ENCODE measurements at regions of chr10 and their contacts with region 1.

Region 1: DNA sequence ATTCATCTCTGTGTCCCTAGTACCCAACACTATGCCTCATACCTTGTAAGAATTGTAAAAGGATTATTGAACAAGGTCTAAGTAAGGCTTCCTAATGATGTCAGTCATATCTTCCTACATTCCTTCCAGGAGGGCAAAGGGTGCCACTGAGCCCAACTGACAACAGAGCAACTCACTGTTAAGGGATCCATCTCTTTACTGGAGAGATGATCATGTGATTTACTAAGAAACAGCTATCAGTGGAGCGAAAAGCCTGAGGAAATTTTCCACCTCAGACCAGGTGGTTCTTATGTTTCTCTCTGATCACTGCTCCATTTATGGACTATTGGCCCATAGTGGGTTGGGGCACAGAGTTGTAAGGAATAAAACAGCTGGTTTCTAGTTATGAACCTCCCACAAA is 38.9 kb upstream of the CNNM1 start:
- DNase-seq: no peak

Region 2: DNA sequence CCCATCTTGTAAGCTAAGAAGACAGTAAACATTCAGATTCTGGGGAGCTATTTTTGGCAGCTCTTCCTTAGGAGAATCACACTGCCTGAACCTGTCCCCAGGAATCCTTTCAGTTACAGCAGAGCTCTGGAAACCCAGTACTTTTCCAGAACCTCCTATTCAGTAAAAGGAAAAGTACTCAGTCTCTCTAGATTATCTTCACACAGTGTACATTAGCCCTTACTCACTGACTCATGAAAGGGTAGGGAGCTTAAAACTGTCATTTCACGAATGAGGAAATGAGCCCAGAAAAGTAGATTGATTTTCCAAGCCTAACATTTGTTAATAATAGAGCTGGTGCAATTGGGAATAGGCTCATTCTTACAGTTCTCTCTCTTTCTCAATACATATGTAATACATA is 35.0 kb after region 1 on chr10:
- intact Hi-C with region 1: loop called (anchors 2 kb)
- DNase-seq: no peak

Region 3: DNA sequence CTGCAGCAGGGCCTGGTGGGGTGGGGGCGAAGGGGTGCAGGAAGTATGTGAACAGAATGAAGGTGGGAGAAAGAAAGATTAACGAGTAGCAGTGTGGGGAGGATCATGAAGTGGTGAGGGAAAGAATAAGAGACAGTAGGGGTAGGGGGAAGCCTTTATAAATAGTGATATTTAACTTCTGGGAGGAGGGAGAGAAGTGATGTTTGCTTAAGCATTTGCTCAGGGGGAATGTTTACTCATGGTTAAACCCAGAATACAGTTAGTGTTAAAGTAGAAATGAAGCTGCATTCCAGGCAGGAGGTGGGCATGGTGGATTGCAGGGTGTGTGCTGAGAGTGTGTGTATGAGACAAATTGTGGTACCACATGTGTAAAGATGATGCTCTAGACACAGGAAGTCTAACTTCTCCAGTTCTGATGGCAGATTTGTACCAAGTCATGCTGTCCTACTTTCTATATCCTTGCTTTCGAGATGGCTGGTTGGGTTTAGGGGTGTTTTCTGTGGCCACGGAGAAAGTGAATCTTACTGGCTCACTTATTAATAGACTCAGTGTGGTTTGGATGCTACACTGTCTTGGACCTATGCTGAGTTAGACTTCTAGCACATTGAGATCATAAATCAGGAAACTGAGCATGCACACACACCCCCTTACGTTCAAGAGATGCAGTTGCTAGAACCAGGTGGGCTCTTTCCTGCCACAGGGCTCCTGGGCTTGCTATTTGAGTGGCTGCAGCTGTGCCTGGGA is 730.0 kb after region 1 on chr10:
- intact Hi-C with region 1: no loop called
- DNase-seq: no peak